ENCODE measurements at regions of chr2 and their contacts with region 1.

Region 1: GRCh38 chr2:64203858-64204632 is 59.8 kb upstream of the PELI1 start:
- DNase-seq: peak in 5 of 9 donors; percentile 12 to 67 (median 28)
- ATAC-seq: peak; percentile 81
- H3K4me3 ChIP-seq: peak overlapping the region; percentile 52
- H3K4me3 Mint-ChIP-seq: peak overlapping the region; percentile 72 to 89 (median 80)
- H3K27ac ChIP-seq: peak overlapping the region; percentile 66
- H3K27ac Mint-ChIP-seq: peak overlapping the region; percentile 82 to 95 (median 94)
- H3K4me1 ChIP-seq: peaks cover 0 to 51% of the 10 kb centered on the region in 2 donors
- H3K4me1 Mint-ChIP-seq: peaks cover 26 to 91% (median 81%) of the 10 kb centered on the region in 7 donors
- H3K27me3 ChIP-seq: no peaks in the 10 kb centered on the region
- H3K27me3 Mint-ChIP-seq: no peaks in the 10 kb centered on the region

Region 2: GRCh38 chr2:64179582-64180321 is 24.3 kb before region 1 on chr2:
- CTCF ChIA-PET with region 1: no interaction called
- POLR2A ChIA-PET with region 1: no interaction called
- intact Hi-C with region 1: loop called in 1 of 2 experiments (anchors 1 kb)
- DNase-seq: no peak
- ATAC-seq: peak; percentile 34
- H3K4me3 ChIP-seq: no peak overlapping the region
- H3K4me3 Mint-ChIP-seq: no peak overlapping the region
- H3K27ac ChIP-seq: no peak overlapping the region
- H3K27ac Mint-ChIP-seq: peak overlapping the region in 1 of 9 donors; percentile 64
- H3K4me1 ChIP-seq: no peaks in the 10 kb centered on the region
- H3K4me1 Mint-ChIP-seq: peaks cover 0 to 16% (median 0%) of the 10 kb centered on the region in 7 donors
- H3K27me3 ChIP-seq: no peaks in the 10 kb centered on the region
- H3K27me3 Mint-ChIP-seq: peaks cover 0 to 9% (median 0%) of the 10 kb centered on the region in 5 donors

Region 3: GRCh38 chr2:64189167-64189566 is 14.9 kb before region 1 on chr2:
- CTCF ChIA-PET with region 1: interaction called, 3 read pairs
- POLR2A ChIA-PET with region 1: interaction called, 4 read pairs
- intact Hi-C with region 1: loop called in 1 of 2 experiments (anchors 2 kb)
- DNase-seq: no peak
- ATAC-seq: no peak
- H3K4me3 ChIP-seq: no peak overlapping the region
- H3K4me3 Mint-ChIP-seq: no peak overlapping the region
- H3K27ac ChIP-seq: no peak overlapping the region
- H3K27ac Mint-ChIP-seq: peak overlapping the region in 2 of 9 donors; percentile 19
- H3K4me1 ChIP-seq: no peaks in the 10 kb centered on the region
- H3K4me1 Mint-ChIP-seq: peaks cover 16 to 41% (median 37%) of the 10 kb centered on the region in 7 donors
- H3K27me3 ChIP-seq: no peaks in the 10 kb centered on the region
- H3K27me3 Mint-ChIP-seq: peaks cover 0 to 21% (median 0%) of the 10 kb centered on the region in 5 donors

Region 4: GRCh38 chr2:64222351-64222750 is 18.3 kb after region 1 on chr2:
- CTCF ChIA-PET with region 1: interaction called, 4 read pairs
- POLR2A ChIA-PET with region 1: interaction called, 8 read pairs
- intact Hi-C with region 1: loop called in 1 of 2 experiments (anchors 1 kb)
- DNase-seq: no peak
- ATAC-seq: no peak
- H3K4me3 ChIP-seq: no peak overlapping the region
- H3K4me3 Mint-ChIP-seq: peak overlapping the region in 4 of 10 donors; percentile 67 to 76 (median 70)
- H3K27ac ChIP-seq: no peak overlapping the region
- H3K27ac Mint-ChIP-seq: peak overlapping the region in 7 of 9 donors; percentile 22 to 93 (median 89)
- H3K4me1 ChIP-seq: peaks cover 0 to 23% of the 10 kb centered on the region in 2 donors
- H3K4me1 Mint-ChIP-seq: peaks cover 16 to 72% (median 37%) of the 10 kb centered on the region in 7 donors
- H3K27me3 ChIP-seq: no peaks in the 10 kb centered on the region
- H3K27me3 Mint-ChIP-seq: no peaks in the 10 kb centered on the region

Region 5: GRCh38 chr2:64283641-64284361 is 79.8 kb after region 1 on chr2:
- CTCF ChIA-PET with region 1: no interaction called
- POLR2A ChIA-PET with region 1: no interaction called
- intact Hi-C with region 1: loop called in 1 of 2 experiments (anchors 1 kb)
- DNase-seq: peak in 7 of 9 donors; percentile 14 to 54 (median 41)
- ATAC-seq: peak; percentile 82
- H3K4me3 ChIP-seq: peak overlapping the region; percentile 41
- H3K4me3 Mint-ChIP-seq: no peak overlapping the region
- H3K27ac ChIP-seq: peak overlapping the region; percentile 59
- H3K27ac Mint-ChIP-seq: no peak overlapping the region
- H3K4me1 ChIP-seq: peaks cover 8 to 12% of the 10 kb centered on the region in 2 donors
- H3K4me1 Mint-ChIP-seq: no peaks in the 10 kb centered on the region
- H3K27me3 ChIP-seq: no peaks in the 10 kb centered on the region
- H3K27me3 Mint-ChIP-seq: no peaks in the 10 kb centered on the region

Measured in naive thymus-derived CD4-positive, alpha-beta T cell (primary cell).